Heart left ventricle (tissue), 16 donors: ENCODE measurements at regions of chr17 and their contacts with region 1.

Region 1: DNA sequence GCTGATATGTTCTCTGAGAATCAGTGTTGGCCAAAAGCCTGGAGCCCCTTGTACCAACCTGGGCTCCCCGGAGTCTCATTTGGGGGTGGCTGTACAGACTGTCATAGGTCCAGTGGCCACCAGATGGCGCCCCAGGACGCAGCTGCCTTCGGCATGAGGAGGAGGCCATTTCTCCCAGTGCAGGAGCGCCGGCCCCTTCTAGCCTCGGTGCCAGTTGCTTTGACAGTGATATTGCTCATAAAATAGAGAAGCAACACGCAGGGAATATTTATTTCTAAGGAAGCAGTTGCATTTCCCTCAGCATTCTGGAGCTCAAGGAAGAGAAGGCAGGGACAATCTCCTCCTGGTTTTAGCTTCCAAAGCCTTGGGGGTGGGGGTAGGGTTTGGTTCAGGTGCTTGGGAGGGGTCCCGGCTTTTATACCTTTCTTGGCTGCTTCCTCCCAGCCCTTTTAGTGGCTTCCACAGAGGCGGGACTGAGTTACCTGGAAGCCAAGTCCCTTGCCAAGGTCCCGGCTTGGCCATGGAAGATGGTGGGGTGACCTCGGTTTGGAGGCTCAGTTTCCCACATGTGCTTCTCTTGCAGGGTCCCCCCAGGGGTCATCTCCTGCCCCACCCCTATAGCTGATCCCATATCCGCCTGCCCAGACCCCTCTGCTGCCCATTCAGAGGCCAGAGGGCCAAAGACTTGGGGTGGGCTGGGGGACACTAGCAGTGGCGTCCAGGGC is 117.8 kb upstream of the CDC42EP4 start:
- DNase-seq: peak; percentile 82 to 93 (median 89)
- ATAC-seq: peak; percentile 79 to 94 (median 92)
- H3K4me3 ChIP-seq: no peak overlapping the region
- H3K27ac ChIP-seq: no peak overlapping the region
- H3K4me1 ChIP-seq: peaks cover 0 to 19% (median 4%) of the 10 kb centered on the region in 12 donors
- H3K27me3 ChIP-seq: no peaks in the 10 kb centered on the region
- CTCF ChIP-seq: peak; percentile 92 to 99 (median 97)
- POLR2A ChIP-seq: no peak

Region 2: DNA sequence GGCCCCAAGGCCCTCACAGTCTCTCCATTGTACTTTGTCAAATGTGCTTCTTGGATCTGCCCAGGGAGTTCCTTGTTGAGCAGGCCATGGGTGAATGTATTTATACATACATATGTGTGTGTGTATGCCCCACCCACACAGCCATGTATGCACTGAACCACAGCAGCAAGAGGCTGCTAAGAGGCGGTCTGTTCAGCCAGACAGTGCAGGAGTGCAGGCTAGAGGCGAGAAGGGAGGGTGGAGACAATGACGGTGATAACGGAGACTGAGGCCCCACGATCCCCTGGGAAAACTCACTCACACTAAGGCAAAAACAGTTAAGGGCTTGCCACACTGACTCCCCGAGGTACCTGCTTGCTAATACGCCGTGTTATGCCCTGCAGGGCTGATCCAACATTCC is 33.2 kb after region 1 on chr17:
- intact Hi-C with region 1: no loop called
- DNase-seq: no peak
- ATAC-seq: no peak
- H3K4me3 ChIP-seq: no peak overlapping the region
- H3K27ac ChIP-seq: no peak overlapping the region
- H3K4me1 ChIP-seq: no peaks in the 10 kb centered on the region
- H3K27me3 ChIP-seq: no peaks in the 10 kb centered on the region
- CTCF ChIP-seq: no peak
- POLR2A ChIP-seq: no peak

Region 3: DNA sequence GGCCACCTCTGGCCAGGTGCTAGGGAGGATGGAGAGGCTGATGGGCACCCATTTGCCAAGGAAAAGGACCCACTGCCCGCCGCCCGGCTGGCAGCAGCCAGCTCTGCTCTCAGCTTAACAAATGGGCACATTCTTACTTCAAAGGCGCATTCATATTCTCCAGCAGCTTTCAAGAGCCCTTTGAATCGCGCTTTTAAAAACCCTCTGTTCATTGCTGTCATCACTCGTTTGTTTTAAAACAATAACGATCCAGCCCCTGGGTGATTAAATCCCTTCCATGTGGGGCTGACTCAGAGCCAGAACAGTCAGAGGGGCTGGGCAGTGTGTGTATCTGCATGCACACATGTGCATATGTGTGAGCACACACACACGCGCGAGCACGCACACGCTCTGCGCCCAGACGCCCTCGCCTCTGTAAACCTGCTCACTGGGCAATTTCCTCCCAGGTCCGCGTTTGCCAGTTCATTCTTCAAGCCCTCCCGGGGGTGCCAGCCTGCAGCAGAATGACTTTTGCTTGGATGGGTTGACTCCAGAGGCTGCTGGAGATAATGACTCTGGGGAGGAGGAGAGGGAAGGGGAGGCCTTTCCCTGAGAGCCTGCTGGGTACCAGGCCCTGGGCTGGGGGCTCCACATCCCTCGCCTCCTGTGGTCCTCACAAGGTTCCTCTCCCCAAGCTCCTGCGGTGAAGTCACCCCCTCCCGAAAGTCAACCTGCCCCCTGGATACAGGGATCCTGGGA is 81.5 kb after region 1 on chr17:
- intact Hi-C with region 1: loop called in 1 of 10 experiments (anchors 10 kb)
- DNase-seq: no peak
- ATAC-seq: no peak
- H3K4me3 ChIP-seq: no peak overlapping the region
- H3K27ac ChIP-seq: no peak overlapping the region
- H3K4me1 ChIP-seq: no peaks in the 10 kb centered on the region
- H3K27me3 ChIP-seq: no peaks in the 10 kb centered on the region
- CTCF ChIP-seq: no peak
- POLR2A ChIP-seq: no peak

Region 4: DNA sequence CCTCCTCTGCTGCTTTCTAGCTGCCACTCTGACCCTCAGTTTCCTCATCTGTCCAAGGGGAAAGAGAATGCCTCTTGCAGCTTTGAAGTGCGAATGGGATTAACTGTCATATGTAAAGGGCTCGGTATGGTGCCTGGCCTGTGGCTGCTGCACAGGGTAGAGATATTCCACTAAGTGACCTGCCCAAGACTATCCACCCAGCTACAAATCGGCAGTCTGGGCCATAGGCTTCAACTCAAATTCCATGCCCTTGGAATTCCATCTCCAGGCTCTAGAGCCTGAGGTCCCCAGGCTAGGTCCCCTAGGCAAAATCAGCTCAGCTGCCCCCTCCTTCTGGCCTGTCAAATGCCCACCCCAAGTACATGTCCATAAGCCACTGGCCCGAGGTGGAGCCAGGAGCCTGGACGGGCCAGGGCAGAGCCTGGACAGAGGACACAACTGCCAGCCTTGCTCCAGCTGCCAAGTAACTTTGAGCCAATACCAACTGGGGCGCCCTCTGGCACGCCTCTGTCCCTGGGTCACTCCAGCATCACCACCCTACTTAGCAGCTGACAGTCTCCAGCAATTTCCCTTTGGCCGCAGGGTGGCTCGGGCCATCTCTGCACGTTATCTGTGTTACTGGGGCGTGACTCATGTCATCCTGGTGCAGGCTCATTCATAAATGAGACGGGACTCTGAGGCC is 157.5 kb after region 1 on chr17:
- intact Hi-C with region 1: loop called in 2 of 10 experiments (anchors 5 to 10 kb)
- DNase-seq: peak; percentile 43 to 78 (median 66)
- ATAC-seq: peak; percentile 80 to 96 (median 91)
- H3K4me3 ChIP-seq: no peak overlapping the region
- H3K27ac ChIP-seq: no peak overlapping the region
- H3K4me1 ChIP-seq: peaks cover 0 to 12% (median 1%) of the 10 kb centered on the region in 12 donors
- H3K27me3 ChIP-seq: no peaks in the 10 kb centered on the region
- CTCF ChIP-seq: peak in 2 of 12 donors; percentile 18 to 20
- POLR2A ChIP-seq: no peak

Region 5: DNA sequence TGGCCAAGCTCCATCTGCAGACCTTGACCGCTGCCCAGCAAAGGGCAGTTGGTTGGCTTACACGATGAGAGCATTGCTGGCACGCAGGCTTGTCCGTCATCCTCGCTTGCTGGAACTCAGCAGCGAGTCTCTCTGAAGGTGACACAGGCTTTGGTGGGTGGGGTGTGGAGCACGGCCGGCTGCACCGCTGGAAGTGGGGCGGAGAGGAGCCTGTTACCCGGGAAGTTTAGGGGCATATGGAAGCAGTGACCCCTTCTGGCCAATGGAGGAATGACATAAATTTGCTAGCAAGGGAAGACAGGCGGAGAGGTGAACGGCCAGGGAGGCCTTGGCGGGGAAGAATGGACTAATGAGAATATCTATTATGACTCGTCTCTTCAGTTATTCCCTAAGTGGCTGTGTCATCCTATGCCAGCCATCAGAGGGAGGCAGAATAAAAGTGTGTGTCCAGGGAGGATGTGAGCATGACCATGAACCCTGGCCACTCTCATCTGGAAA is 280.5 kb after region 1 on chr17:
- intact Hi-C with region 1: loop called (anchors 1 to 2 kb)
- DNase-seq: peak; percentile 63 to 80 (median 77)
- ATAC-seq: peak; percentile 87 to 97 (median 96)
- H3K4me3 ChIP-seq: no peak overlapping the region
- H3K27ac ChIP-seq: no peak overlapping the region
- H3K4me1 ChIP-seq: peaks cover 0 to 11% (median 3%) of the 10 kb centered on the region in 12 donors
- H3K27me3 ChIP-seq: peaks cover 0 to 23% (median 3%) of the 10 kb centered on the region in 9 donors
- CTCF ChIP-seq: peak; percentile 65 to 87 (median 78)
- POLR2A ChIP-seq: no peak

Region 6: DNA sequence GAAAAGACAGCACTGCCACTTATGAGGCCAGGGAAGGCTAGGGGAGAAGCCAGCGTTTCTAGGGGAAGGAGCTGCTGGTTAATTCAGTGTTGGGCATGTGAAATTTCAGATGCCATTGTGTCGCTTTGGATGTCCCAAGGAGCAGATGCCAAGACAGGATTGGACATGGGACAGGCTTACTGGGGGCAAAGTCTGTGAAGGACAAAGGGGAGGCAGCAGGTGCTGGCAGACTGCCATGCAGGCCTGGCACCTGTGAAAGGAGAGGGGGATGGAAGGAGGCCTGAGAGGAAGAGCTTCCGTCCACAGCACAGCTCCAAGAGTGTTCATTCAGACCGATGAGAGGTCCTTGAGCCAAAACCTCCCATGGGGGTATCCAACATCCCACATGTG is 518.4 kb after region 1 on chr17:
- intact Hi-C with region 1: loop called in 4 of 10 experiments (anchors 10 kb)
- DNase-seq: no peak
- ATAC-seq: no peak
- H3K4me3 ChIP-seq: no peak overlapping the region
- H3K27ac ChIP-seq: no peak overlapping the region
- H3K4me1 ChIP-seq: peaks cover 0 to 12% (median 9%) of the 10 kb centered on the region in 12 donors
- H3K27me3 ChIP-seq: peaks cover 0 to 60% (median 19%) of the 10 kb centered on the region in 9 donors
- CTCF ChIP-seq: no peak
- POLR2A ChIP-seq: no peak

Region 7: GRCh38 chr17:74176546-74177001 is 747.0 kb after region 1 on chr17:
- intact Hi-C with region 1: loop called (anchors 2 to 5 kb)
- DNase-seq: peak in 4 of 5 donors; percentile 28 to 51 (median 42)
- ATAC-seq: peak; percentile 72 to 94 (median 82)
- H3K4me3 ChIP-seq: no peak overlapping the region
- H3K27ac ChIP-seq: no peak overlapping the region
- H3K4me1 ChIP-seq: no peaks in the 10 kb centered on the region
- H3K27me3 ChIP-seq: peaks cover 0 to 68% (median 15%) of the 10 kb centered on the region in 9 donors
- CTCF ChIP-seq: peak; percentile 66 to 89 (median 76)
- POLR2A ChIP-seq: no peak